Activated CD4-positive, alpha-beta T cell treated with anti-CD3 and anti-CD28 coated beads, Interleukin-2, amount 10 ng/mL, durations not matched to agents 24 days and 14 days (primary cell): ENCODE measurements at regions of chr17 and their contacts with region 1.

Region 1: GRCh38 chr17:45782889-45783592 is 1.1 kb upstream of the CRHR1 start:
- DNase-seq: peak; percentile 72
- H3K4me3 Mint-ChIP-seq: peak overlapping the region; percentile 74
- H3K27ac Mint-ChIP-seq: no peak overlapping the region
- H3K4me1 Mint-ChIP-seq: peaks cover 4% of the 10 kb centered on the region
- H3K27me3 Mint-ChIP-seq: peaks cover 61% of the 10 kb centered on the region

Region 2: GRCh38 chr17:45834471-45835396 is 51.7 kb after region 1 on chr17:
- intact Hi-C with region 1: loop called (anchors 5 kb)
- DNase-seq: no peak
- H3K4me3 Mint-ChIP-seq: no peak overlapping the region
- H3K27ac Mint-ChIP-seq: no peak overlapping the region
- H3K4me1 Mint-ChIP-seq: no peaks in the 10 kb centered on the region
- H3K27me3 Mint-ChIP-seq: no peaks in the 10 kb centered on the region

Region 3: DNA sequence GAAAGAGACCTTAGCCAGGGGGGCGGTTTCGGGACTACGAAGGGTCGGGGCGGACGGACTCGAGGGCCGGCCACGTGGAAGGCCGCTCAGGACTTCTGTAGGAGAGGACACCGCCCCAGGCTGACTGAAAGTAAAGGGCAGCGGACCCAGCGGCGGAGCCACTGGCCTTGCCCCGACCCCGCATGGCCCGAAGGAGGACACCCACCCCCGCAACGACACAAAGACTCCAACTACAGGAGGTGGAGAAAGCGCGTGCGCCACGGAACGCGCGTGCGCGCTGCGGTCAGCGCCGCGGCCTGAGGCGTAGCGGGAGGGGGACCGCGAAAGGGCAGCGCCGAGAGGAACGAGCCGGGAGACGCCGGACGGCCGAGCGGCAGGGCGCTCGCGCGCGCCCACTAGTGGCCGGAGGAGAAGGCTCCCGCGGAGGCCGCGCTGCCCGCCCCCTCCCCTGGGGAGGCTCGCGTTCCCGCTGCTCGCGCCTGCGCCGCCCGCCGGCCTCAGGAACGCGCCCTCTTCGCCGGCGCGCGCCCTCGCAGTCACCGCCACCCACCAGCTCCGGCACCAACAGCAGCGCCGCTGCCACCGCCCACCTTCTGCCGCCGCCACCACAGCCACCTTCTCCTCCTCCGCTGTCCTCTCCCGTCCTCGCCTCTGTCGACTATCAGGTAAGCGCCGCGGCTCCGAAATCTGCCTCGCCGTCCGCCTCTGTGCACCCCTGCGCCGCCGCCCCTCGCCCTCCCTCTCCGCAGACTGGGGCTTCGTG is 111.2 kb after region 1 on chr17 and contains the start of gene MAPT:
- intact Hi-C with region 1: loop called (anchors 10 kb)
- DNase-seq: peak; percentile 94
- H3K4me3 Mint-ChIP-seq: peak within 1 kb of the TSS; percentile 81
- H3K27ac Mint-ChIP-seq: peak within 1 kb of the TSS; percentile 73
- H3K4me1 Mint-ChIP-seq: peaks cover 11% of the 10 kb centered on the region
- H3K27me3 Mint-ChIP-seq: peaks cover 64% of the 10 kb centered on the region
- total RNA-seq, gene MAPT: 0.37 and 0.47 TPM in 2 replicates